Naive thymus-derived CD8-positive, alpha-beta T cell (primary cell): ENCODE measurements at regions of chr21 and their contacts with region 1.

Region 1: DNA sequence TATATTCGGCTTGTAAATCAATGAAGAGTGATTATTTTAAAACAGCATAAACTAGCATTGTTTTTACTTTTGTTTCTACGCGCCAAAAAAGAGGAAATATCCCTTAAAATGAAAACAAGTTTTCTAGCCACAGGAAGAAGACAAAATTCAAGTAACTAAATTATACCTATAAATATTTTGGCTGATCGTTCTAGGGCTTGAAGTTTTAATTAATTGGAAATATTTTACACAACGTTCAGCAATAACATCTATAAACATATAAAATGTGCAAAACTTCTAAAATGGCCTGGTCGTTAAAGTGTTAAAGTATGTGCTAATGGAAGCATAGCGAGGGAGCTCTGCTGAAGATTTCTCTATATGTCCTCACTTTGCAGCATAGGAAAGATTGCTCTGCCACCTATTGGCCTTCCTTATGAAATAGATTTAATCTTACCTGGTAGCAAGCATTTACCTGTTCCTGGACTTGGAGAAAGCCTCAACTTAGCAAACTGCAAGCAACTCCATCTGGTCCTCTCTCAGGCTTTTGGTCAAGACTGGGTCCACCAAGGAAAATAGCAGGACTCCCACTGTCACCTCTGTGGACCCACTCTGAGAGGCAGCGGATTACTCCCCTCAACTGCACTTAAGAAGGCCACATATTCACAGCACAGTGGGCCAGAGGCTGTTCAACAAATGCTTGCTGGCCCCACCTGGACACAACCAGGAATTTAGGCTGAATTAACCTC is 351.3 kb upstream of the RUNX1 start:
- DNase-seq: peak in 9 of 10 donors; percentile 3 to 72 (median 46)
- ATAC-seq: peak; percentile 87 to 96
- H3K4me3 Mint-ChIP-seq: no peak overlapping the region
- H3K27ac Mint-ChIP-seq: no peak overlapping the region
- H3K4me1 Mint-ChIP-seq: peaks cover 0 to 8% (median 0%) of the 10 kb centered on the region in 4 donors
- H3K27me3 Mint-ChIP-seq: peaks cover 0 to 8% (median 0%) of the 10 kb centered on the region in 5 donors

Region 2: GRCh38 chr21:34888569-34889319 is 511.7 kb before region 1 on chr21:
- POLR2A ChIA-PET with region 1: interaction called, 13 read pairs
- DNase-seq: peak; percentile 51 to 83 (median 64)
- ATAC-seq: peak; percentile 42 to 48
- H3K4me3 Mint-ChIP-seq: peak overlapping the region; percentile 91 to 99 (median 95)
- H3K27ac Mint-ChIP-seq: peak overlapping the region in 9 of 10 donors; percentile 92 to 99 (median 95)
- H3K4me1 Mint-ChIP-seq: peaks cover 12 to 63% (median 32%) of the 10 kb centered on the region in 4 donors
- H3K27me3 Mint-ChIP-seq: no peaks in the 10 kb centered on the region